Calu3 (cell line): ENCODE measurements at regions of chr12 and their contacts with region 1.

Region 1: DNA sequence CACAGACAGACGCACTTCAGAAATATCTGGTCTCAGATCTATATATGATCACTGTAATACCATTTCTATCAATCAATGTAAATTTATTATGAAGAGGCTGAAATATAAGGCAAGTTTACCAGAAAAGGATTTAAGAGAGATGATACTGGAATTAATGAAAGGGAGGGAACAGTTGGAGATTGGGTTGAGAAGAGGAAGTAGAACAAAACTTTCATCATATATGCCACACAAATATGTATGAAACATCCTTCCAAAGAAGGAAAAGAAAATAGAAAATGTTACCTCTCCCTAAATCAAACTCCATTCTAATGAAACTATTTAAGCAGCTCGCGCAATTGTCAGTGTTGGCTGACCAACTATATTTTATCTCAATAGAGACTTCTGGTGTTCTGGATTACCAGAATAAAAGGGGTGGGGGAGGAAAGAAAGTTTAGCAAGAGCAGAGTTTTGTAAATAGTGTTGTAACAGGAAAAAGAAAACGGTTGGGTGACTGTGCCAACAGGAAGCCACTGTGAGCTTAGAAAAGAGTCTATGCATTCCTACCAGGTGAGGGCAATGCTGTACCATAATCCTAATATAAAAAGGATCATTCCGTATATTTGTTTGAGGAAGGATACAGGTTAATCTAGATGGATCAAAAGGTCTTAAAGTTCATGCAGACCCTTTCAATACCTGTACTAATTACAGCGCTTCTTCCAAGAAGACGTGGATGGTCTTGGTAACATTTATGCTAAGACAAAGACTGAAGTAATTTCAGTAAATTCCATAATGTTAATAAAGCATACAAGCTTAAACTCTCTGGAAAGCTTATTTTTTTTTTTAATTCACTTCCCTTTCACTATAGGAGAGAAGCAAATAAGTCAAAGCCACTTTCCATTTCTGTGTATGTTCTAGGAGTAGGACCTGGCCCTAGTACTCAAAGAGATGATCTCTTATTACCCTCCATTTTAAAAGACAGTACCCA is 14.5 kb upstream of the LLPH start:
- DNase-seq: peak; percentile 76
- H3K4me3 Mint-ChIP-seq: no peak overlapping the region
- H3K27ac Mint-ChIP-seq: peak overlapping the region; percentile 60
- H3K4me1 Mint-ChIP-seq: peaks cover 13% of the 10 kb centered on the region
- H3K27me3 Mint-ChIP-seq: no peaks in the 10 kb centered on the region
- CTCF ChIP-seq: peak; percentile 76

Region 2: GRCh38 chr12:66130277-66131066 is 14.6 kb before region 1 on chr12 and contains the start of gene LLPH:
- CTCF ChIA-PET with region 1: interaction called, 13 read pairs
- intact Hi-C with region 1: no loop called
- DNase-seq: peak; percentile 92
- H3K4me3 Mint-ChIP-seq: peak within 1 kb of the TSS; percentile 86
- H3K27ac Mint-ChIP-seq: peak within 1 kb of the TSS; percentile 67
- H3K4me1 Mint-ChIP-seq: peaks cover 22% of the 10 kb centered on the region
- H3K27me3 Mint-ChIP-seq: no peaks in the 10 kb centered on the region
- CTCF ChIP-seq: no peak
- total RNA-seq, gene LLPH: 46.6 and 47.2 TPM in 2 replicates

Region 3: DNA sequence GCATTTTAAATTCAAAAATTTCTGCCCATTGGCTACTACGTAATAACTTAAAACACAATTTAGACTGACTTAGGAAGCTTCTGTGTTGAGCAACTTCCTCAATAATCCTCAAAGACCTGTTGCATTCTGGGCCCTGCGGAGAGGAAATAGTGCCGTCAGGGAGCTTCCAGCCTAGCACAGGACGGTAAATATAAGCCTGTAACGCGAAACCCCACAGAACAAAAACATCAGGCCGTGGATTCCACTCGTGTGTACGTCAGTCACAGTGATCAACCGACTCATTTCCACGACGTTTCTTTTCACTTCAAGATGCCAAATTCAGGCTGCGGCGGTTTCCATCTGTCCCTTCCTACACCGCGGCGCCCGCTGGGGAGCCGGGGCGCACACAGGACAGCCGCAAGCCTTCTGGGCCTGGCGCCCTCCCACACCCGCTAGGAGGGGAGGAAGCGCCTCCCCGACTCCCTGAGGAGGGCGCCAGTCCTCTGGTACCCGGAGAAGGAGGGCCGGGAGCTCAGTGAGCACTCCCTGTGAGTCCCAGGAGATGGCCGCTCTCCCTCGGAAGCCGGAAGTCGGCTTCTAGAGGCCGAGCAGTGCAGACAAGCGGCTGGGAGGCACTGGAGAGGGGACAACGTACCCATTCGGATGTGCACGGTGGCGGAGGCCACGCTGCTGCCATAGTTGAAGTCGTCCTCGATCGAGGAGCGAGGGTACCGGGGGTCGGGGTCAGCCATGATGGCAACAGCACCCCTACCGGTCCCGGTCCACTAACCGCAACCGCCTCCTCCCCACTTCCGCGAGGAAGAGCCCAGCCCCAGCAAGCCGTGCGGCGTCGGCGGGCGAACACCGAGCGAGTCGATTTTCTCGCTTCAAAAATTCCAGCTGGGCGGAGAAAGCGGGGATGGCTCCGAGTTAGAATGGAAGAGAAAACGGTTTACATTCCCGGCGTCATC is 24.4 kb after region 1 on chr12 and contains the start of gene TMBIM4:
- CTCF ChIA-PET with region 1: interaction called, 12 read pairs
- intact Hi-C with region 1: loop called (anchors 2 kb)
- DNase-seq: peak; percentile 91
- H3K4me3 Mint-ChIP-seq: peak within 1 kb of the TSS; percentile 100
- H3K27ac Mint-ChIP-seq: peak within 1 kb of the TSS; percentile 99
- H3K4me1 Mint-ChIP-seq: peaks cover 25% of the 10 kb centered on the region
- H3K27me3 Mint-ChIP-seq: no peaks in the 10 kb centered on the region
- CTCF ChIP-seq: peak; percentile 63
- total RNA-seq, gene TMBIM4: 77.1 and 89.2 TPM in 2 replicates

Region 4: GRCh38 chr12:66235626-66236281 is 90.7 kb after region 1 on chr12:
- CTCF ChIA-PET with region 1: interaction called, 14 read pairs
- intact Hi-C with region 1: loop called (anchors 1 kb)
- DNase-seq: no peak
- H3K4me3 Mint-ChIP-seq: peak overlapping the region; percentile 40
- H3K27ac Mint-ChIP-seq: no peak overlapping the region
- H3K4me1 Mint-ChIP-seq: peaks cover 19% of the 10 kb centered on the region
- H3K27me3 Mint-ChIP-seq: no peaks in the 10 kb centered on the region
- CTCF ChIP-seq: no peak

Region 5: GRCh38 chr12:66409195-66409871 is 264.3 kb after region 1 on chr12:
- CTCF ChIA-PET with region 1: interaction called, 3 read pairs
- intact Hi-C with region 1: loop called (anchors 5 kb)
- DNase-seq: peak; percentile 53
- H3K4me3 Mint-ChIP-seq: no peak overlapping the region
- H3K27ac Mint-ChIP-seq: no peak overlapping the region
- H3K4me1 Mint-ChIP-seq: no peaks in the 10 kb centered on the region
- H3K27me3 Mint-ChIP-seq: no peaks in the 10 kb centered on the region
- CTCF ChIP-seq: peak; percentile 81

Region 6: GRCh38 chr12:66693901-66694675 is 549.0 kb after region 1 on chr12:
- CTCF ChIA-PET with region 1: interaction called, 4 read pairs
- intact Hi-C with region 1: loop called (anchors 2 kb)
- DNase-seq: peak; percentile 43
- H3K4me3 Mint-ChIP-seq: no peak overlapping the region
- H3K27ac Mint-ChIP-seq: no peak overlapping the region
- H3K4me1 Mint-ChIP-seq: peaks cover 9% of the 10 kb centered on the region
- H3K27me3 Mint-ChIP-seq: no peaks in the 10 kb centered on the region
- CTCF ChIP-seq: peak; percentile 72